BJ (cell line): ENCODE measurements at regions of chr18 and their contacts with region 1.

Region 1: GRCh38 chr18:63131106-63131958 is 188.2 kb downstream of the BCL2 start:
- DNase-seq: peak; percentile 3
- H3K4me3 ChIP-seq: no peak overlapping the region
- H3K27me3 ChIP-seq: peaks cover 7% of the 10 kb centered on the region; the same call in 1 of the 2 replicates
- CTCF ChIP-seq: peak; percentile 67

Region 2: DNA sequence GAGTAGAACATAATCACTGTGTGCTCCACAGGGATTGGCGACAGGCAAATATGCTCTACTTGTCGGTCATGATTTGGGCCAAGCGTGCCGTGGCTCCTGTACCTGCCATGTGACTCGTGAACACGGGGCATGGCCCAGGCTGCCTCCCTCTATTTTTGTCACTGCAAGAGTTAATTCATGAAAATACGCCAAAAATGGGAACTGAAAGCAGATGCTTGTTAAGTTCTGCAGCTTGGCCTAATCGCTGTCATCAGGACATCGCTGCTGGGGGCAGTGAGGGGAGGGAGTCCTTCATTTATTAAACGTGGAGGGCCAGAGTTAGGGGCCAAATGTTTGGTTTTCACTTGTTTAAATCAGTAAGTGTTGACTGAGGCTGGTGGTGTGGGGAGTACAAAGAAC is 10.4 kb after region 1 on chr18:
- CTCF ChIA-PET with region 1: interaction called, 35 read pairs
- POLR2A ChIA-PET with region 1: no interaction called
- DNase-seq: no peak
- H3K4me3 ChIP-seq: no peak overlapping the region
- H3K27me3 ChIP-seq: peaks cover 7% of the 10 kb centered on the region
- CTCF ChIP-seq: no peak

Region 3: GRCh38 chr18:63253428-63254372 is 122.4 kb after region 1 on chr18:
- CTCF ChIA-PET with region 1: no interaction called
- POLR2A ChIA-PET with region 1: no interaction called
- DNase-seq: no peak
- H3K4me3 ChIP-seq: no peak overlapping the region
- H3K27me3 ChIP-seq: peaks cover 7% of the 10 kb centered on the region
- CTCF ChIP-seq: no peak

Region 4: DNA sequence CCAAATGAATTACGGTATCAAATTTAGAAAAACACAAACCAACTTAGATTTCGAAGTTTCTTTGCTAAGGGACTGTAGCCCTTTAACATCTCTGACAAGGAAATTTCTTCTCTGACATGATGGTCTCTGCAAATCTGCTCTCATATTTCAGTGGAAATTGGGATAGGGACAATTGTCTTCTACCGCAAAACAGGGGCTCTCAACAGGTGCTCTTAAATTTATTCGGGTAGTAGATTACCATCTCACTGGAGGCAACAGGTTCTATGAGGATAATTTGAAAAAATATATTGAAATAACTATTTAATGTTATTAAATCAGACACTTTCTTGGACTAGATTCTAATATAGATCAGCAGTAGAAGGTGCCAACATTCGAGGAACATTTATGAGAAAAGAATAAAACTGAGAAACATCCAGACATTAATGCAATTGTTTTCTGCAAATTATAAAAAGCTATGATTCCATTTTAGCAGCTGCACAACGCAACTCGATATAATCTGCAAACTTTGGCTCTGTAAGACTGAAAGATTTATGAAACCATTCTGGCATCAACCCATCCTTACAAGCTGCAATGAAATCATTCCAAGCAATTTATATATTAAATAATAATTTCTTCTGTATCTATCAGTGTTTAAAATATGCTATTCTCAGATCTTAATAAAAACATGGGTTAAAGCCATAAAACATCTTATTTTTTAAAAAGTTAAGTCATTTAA is 198.3 kb after region 1 on chr18:
- CTCF ChIA-PET with region 1: interaction called, 76 read pairs
- POLR2A ChIA-PET with region 1: no interaction called
- DNase-seq: no peak
- H3K4me3 ChIP-seq: no peak overlapping the region
- H3K27me3 ChIP-seq: no peaks in the 10 kb centered on the region
- CTCF ChIP-seq: no peak